Caco-2 (cell line): ENCODE measurements at regions of chr1 and their contacts with region 1.

Region 1: DNA sequence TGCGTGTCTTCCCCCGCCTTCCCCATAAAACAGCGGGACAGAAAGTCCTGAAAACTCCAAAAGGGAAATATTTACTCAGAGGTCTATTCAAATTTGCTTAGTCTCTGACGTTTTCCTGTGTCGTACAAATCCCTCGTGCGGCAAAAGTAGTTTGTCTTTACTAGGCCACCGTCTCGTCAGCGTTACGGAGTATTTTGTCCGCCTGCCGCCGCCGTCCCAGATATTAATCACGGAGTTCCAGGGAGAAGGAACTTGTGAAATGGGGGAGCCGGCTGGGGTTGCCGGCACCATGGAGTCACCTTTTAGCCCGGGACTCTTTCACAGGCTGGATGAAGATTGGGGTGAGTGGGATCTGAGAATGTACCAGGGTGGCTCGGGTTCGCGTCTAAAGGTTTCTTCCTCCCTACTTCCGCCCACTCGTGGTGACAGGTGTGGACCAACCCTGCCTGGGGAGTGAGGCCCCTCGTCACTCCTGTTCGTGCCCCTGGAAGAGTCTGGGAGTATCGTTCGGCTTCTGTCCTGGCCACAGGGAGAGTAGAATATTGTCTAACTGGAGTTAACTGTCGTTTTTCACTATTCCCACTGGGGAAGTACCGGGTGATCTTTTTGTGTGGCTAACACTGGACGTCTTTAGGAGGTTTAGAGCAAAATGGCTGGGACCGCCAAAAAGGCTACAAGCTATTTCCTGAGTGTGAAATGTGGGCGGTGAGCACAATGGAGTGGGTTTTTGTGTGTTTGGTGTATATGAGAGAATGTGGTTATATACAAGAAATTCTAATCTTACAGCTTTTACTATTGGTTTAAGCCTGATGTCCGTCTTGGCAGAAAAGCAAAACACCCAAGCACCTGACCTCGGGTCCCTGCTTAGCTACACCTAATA is at the start of gene ATF6:
- DNase-seq: peak; percentile 85 to 87
- H3K4me3 ChIP-seq: peak within 1 kb of the TSS; percentile 79
- H3K4me3 Mint-ChIP-seq: peak within 1 kb of the TSS; percentile 94
- H3K27ac Mint-ChIP-seq: peak within 1 kb of the TSS; percentile 91
- H3K4me1 ChIP-seq: peaks cover 5% of the 10 kb centered on the region; the same call in 1 of the 2 replicates
- H3K4me1 Mint-ChIP-seq: peaks cover 9% of the 10 kb centered on the region
- H3K27me3 ChIP-seq: no peaks in the 10 kb centered on the region
- H3K27me3 Mint-ChIP-seq: no peaks in the 10 kb centered on the region
- CTCF ChIP-seq: no peak
- total RNA-seq, gene ATF6: 14.5 and 16.4 TPM in 2 replicates

Region 2: DNA sequence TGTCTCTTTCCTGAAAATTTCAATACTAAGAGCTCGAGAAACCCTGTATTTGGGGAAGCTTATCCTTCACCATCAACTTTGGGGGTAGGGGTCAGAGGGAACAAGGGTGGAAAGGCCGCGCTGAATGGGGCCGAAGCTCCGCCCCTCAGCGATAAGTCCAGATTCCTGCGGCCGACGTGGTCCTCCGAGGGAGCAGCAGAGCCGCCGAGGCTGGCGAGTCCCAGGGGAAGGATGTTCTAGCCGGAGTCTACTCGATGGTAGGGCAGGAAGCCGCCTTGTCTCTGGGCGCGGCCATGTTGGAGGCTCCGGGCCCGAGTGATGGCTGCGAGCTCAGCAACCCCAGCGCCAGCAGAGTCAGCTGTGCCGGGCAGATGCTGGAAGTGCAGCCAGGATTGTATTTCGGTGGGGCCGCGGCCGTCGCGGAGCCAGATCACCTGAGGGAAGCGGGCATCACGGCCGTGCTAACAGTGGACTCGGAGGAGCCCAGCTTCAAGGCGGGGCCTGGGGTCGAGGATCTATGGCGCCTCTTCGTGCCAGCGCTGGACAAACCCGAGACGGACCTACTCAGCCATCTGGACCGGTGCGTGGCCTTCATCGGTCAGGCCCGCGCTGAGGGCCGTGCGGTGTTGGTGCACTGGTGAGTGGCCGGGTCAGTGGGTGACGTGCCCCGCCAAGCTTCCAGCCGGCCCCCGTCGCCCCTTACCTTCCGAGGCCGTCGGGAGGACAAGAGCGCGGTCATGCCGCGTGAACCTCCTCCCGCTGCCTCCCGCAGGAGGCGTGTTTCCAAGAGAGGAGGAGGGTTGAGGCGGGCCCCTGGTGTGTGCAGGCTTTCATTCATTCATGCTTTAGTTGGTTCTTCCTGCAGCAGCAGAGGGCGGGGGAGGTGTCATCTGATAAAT is 16.6 kb before region 1 on chr1 and contains the start of gene DUSP12:
- CTCF ChIA-PET with region 1: no interaction called
- POLR2A ChIA-PET with region 1: interaction called, 6 read pairs
- intact Hi-C with region 1: loop called (anchors 1 kb)
- DNase-seq: peak; percentile 95
- H3K4me3 ChIP-seq: peak within 1 kb of the TSS; percentile 99
- H3K4me3 Mint-ChIP-seq: peak within 1 kb of the TSS; percentile 91
- H3K27ac Mint-ChIP-seq: peak within 1 kb of the TSS; percentile 96
- H3K4me1 ChIP-seq: peaks cover 6% of the 10 kb centered on the region; the same call in 1 of the 2 replicates
- H3K4me1 Mint-ChIP-seq: peaks cover 8% of the 10 kb centered on the region
- H3K27me3 ChIP-seq: no peaks in the 10 kb centered on the region
- H3K27me3 Mint-ChIP-seq: peaks cover 9% of the 10 kb centered on the region
- CTCF ChIP-seq: peak in 1 of 2 experiments; percentile 22
- total RNA-seq, gene DUSP12: 51.2 and 54.9 TPM in 2 replicates

Region 3: DNA sequence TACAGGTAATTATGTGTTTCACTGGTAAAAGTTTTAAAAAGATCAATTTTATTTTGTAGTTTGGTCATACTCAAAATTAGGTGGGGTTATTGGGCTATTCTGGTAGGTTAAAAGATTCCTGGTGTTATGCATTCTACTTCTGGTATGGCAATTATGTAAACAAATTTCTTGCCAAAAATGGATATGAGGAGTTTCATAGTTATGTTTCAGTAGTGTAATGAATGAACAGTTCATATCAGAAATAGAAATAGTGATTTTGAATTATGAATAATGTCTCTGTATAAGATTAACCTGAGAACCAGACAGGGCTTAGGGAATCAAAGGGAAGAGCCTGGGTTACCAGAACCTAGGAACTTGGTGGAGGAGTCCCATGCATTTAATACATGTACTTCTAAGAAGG is 15.7 kb after region 1 on chr1:
- CTCF ChIA-PET with region 1: no interaction called
- POLR2A ChIA-PET with region 1: no interaction called
- intact Hi-C with region 1: no loop called
- DNase-seq: no peak
- H3K4me3 ChIP-seq: no peak overlapping the region
- H3K4me3 Mint-ChIP-seq: no peak overlapping the region
- H3K27ac Mint-ChIP-seq: no peak overlapping the region
- H3K4me1 ChIP-seq: no peaks in the 10 kb centered on the region
- H3K4me1 Mint-ChIP-seq: no peaks in the 10 kb centered on the region
- H3K27me3 ChIP-seq: no peaks in the 10 kb centered on the region
- H3K27me3 Mint-ChIP-seq: no peaks in the 10 kb centered on the region
- CTCF ChIP-seq: no peak

Region 4: GRCh38 chr1:162416909-162417308 is 650.6 kb after region 1 on chr1:
- CTCF ChIA-PET with region 1: interaction called, 10 read pairs
- POLR2A ChIA-PET with region 1: no interaction called
- intact Hi-C with region 1: no loop called
- DNase-seq: no peak
- H3K4me3 ChIP-seq: no peak overlapping the region
- H3K4me3 Mint-ChIP-seq: no peak overlapping the region
- H3K27ac Mint-ChIP-seq: no peak overlapping the region
- H3K4me1 ChIP-seq: no peaks in the 10 kb centered on the region
- H3K4me1 Mint-ChIP-seq: no peaks in the 10 kb centered on the region
- H3K27me3 ChIP-seq: no peaks in the 10 kb centered on the region
- H3K27me3 Mint-ChIP-seq: peaks cover under 1% of the 10 kb centered on the region
- CTCF ChIP-seq: no peak